GM12878 (cell line): ENCODE measurements at regions of chr15 and their contacts with region 1.

Region 1: GRCh38 chr15:38690689-38691332 is 126.2 kb upstream of the RASGRP1 start:
- DNase-seq: no peak
- ATAC-seq: peak; percentile 68
- H3K4me3 ChIP-seq: no peak overlapping the region
- H3K27ac ChIP-seq: peak overlapping the region; percentile 27; the same call in 1 of the 2 replicates
- H3K4me1 ChIP-seq: peaks cover 28% of the 10 kb centered on the region
- H3K27me3 ChIP-seq: no peaks in the 10 kb centered on the region
- CTCF ChIP-seq: peak; percentile 85 to 89 (median 87); a peak in 5 of 6 replicates
- EP300 ChIP-seq: no peak
- POLR2A ChIP-seq: no peak
- RAD21 ChIP-seq: peak; percentile 79

Region 2: GRCh38 chr15:38461066-38461833 is 229.6 kb before region 1 on chr15:
- CTCF ChIA-PET with region 1: interaction called, 30 read pairs
- POLR2A ChIA-PET with region 1: no interaction called
- RAD21 ChIA-PET with region 1: interaction called, 6 read pairs
- SMC1A ChIA-PET with region 1: interaction called, 10 read pairs
- in situ Hi-C with region 1: no loop called
- intact Hi-C with region 1: no loop called
- DNase-seq: no peak
- ATAC-seq: peak; percentile 92
- H3K4me3 ChIP-seq: 0 out of 2 replicates have a peak overlapping the region, but pooled peaks have one; percentile 13
- H3K27ac ChIP-seq: peak overlapping the region; percentile 40
- H3K4me1 ChIP-seq: peaks cover 15% of the 10 kb centered on the region; the same call in 1 of the 2 replicates
- H3K27me3 ChIP-seq: no peaks in the 10 kb centered on the region
- CTCF ChIP-seq: no peak
- EP300 ChIP-seq: 0 out of 4 replicates have a peak, but pooled peaks of 1 of the 2 experiments have one; percentile 36
- POLR2A ChIP-seq: no peak
- RAD21 ChIP-seq: no peak

Region 3: DNA sequence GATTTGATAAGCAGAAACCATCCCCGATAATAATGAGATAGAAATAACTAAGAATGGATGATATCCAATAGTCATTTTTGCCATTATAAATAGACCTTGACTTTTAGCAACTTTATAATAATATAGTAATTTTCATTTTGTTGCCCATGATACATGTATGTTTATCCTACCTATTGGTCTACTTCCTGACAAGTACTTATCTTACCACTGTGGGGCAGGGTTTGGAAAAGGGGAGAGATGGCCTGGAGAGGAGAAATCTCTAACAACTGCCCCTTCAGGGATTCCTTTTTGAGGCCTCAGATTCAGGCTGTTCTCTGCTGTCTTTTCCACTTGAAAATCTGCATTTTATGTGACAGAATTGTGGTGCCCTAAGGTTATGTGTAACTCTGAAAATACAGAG is 194.7 kb before region 1 on chr15:
- CTCF ChIA-PET with region 1: interaction called, 32 read pairs
- POLR2A ChIA-PET with region 1: interaction called, 4 read pairs
- RAD21 ChIA-PET with region 1: interaction called, 4 read pairs
- SMC1A ChIA-PET with region 1: interaction called, 37 read pairs
- in situ Hi-C with region 1: no loop called
- intact Hi-C with region 1: no loop called
- DNase-seq: no peak
- ATAC-seq: no peak
- H3K4me3 ChIP-seq: no peak overlapping the region
- H3K27ac ChIP-seq: no peak overlapping the region
- H3K4me1 ChIP-seq: no peaks in the 10 kb centered on the region
- H3K27me3 ChIP-seq: no peaks in the 10 kb centered on the region
- CTCF ChIP-seq: no peak
- EP300 ChIP-seq: no peak
- POLR2A ChIP-seq: no peak
- RAD21 ChIP-seq: no peak

Region 4: DNA sequence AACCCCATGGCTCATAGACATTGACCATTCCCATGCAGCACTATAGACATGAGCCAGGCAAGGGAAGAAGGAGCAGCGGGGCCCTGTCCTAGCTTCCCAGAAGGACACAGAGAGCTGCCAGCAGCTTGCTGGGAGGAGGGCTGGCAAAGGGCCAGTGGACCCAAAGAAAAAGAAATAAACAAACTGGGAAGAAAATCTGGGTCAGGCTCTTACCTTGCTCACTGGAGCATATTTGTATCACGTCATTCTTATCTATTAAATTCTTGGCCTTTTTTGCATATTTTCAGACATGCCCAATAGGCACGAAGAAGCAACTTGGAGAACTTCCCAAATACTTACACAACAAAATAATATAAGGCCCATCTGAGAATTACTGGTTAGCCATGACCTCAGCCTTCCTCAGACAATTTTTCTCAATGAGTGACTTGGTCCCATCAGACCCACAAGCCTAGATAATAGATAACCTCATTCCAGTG is 154.6 kb before region 1 on chr15:
- CTCF ChIA-PET with region 1: interaction called, 14 read pairs
- POLR2A ChIA-PET with region 1: interaction called, 3 read pairs
- RAD21 ChIA-PET with region 1: interaction called, 21 read pairs
- SMC1A ChIA-PET with region 1: interaction called, 28 read pairs
- in situ Hi-C with region 1: no loop called
- intact Hi-C with region 1: no loop called
- DNase-seq: no peak
- ATAC-seq: no peak
- H3K4me3 ChIP-seq: no peak overlapping the region
- H3K27ac ChIP-seq: no peak overlapping the region
- H3K4me1 ChIP-seq: no peaks in the 10 kb centered on the region
- H3K27me3 ChIP-seq: no peaks in the 10 kb centered on the region
- CTCF ChIP-seq: no peak
- EP300 ChIP-seq: no peak
- POLR2A ChIP-seq: no peak
- RAD21 ChIP-seq: no peak

Region 5: DNA sequence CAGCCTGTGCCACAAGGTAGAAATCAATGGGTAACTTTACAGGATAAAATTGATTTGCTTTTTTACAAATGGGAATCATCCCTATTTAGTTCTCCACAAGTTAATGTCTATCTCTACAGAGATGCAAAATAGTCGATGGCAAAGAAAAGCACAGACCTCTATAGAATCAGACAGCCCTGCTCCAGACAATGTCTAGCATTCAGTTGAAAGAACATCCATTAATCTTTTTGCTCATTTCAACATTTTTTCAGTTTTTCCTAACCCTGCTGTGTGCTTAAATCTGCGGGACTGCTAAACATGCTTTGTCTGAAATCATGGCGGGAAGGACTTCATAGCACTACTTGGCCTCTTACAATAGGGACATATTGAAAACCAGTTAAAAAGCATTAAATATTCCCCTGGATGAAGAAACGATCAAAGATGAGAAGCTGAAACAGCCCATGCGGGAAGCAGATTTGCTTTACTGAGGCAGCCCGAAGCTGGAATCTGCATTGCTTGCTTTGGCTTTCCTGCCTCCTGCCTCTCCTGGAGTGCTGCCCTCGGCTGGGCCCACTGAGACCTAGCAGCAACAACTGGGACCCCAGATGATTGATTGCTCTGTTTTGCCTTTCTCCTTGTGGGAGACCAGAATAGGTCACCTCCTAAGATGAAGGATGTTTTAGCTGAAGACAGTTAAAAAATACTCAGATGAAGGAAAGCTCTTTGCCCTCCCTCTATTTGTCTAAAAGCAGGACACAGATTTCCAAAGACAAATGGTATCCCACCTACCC is 87.7 kb before region 1 on chr15:
- CTCF ChIA-PET with region 1: interaction called, 10 read pairs
- POLR2A ChIA-PET with region 1: no interaction called
- RAD21 ChIA-PET with region 1: interaction called, 5 read pairs
- SMC1A ChIA-PET with region 1: interaction called, 8 read pairs
- in situ Hi-C with region 1: no loop called
- intact Hi-C with region 1: no loop called
- DNase-seq: no peak
- ATAC-seq: peak; percentile 22; the same call in 2 of the 3 replicates
- H3K4me3 ChIP-seq: no peak overlapping the region
- H3K27ac ChIP-seq: no peak overlapping the region
- H3K4me1 ChIP-seq: no peaks in the 10 kb centered on the region; the same call in 1 of the 2 replicates
- H3K27me3 ChIP-seq: peaks cover 0 to 3% of the 10 kb centered on the region in 2 experiments; a peak in 1 of 4 replicates
- CTCF ChIP-seq: no peak
- EP300 ChIP-seq: no peak
- POLR2A ChIP-seq: no peak
- RAD21 ChIP-seq: no peak

Region 6: GRCh38 chr15:38660738-38661137 is 30.1 kb before region 1 on chr15:
- CTCF ChIA-PET with region 1: interaction called, 115 read pairs
- POLR2A ChIA-PET with region 1: interaction called, 5 read pairs
- RAD21 ChIA-PET with region 1: interaction called, 26 read pairs
- SMC1A ChIA-PET with region 1: interaction called, 205 read pairs
- in situ Hi-C with region 1: no loop called
- intact Hi-C with region 1: no loop called
- DNase-seq: no peak
- ATAC-seq: peak; percentile 67
- H3K4me3 ChIP-seq: no peak overlapping the region
- H3K27ac ChIP-seq: no peak overlapping the region
- H3K4me1 ChIP-seq: no peaks in the 10 kb centered on the region; the same call in 1 of the 2 replicates
- H3K27me3 ChIP-seq: no peaks in the 10 kb centered on the region
- CTCF ChIP-seq: no peak
- EP300 ChIP-seq: no peak
- POLR2A ChIP-seq: no peak
- RAD21 ChIP-seq: no peak